ENCODE measurements at regions of chr2 and their contacts with region 1.

Region 1: GRCh38 chr2:105754011-105754410 is 9.3 kb downstream of the NCK2 start:
- DNase-seq: peak; percentile 39
- H3K4me3 Mint-ChIP-seq: peak overlapping the region; percentile 57
- H3K27ac Mint-ChIP-seq: peak overlapping the region; percentile 88
- H3K4me1 Mint-ChIP-seq: peaks cover 85% of the 10 kb centered on the region
- H3K27me3 Mint-ChIP-seq: no peaks in the 10 kb centered on the region

Region 2: GRCh38 chr2:105557021-105557920 is 196.7 kb before region 1 on chr2:
- intact Hi-C with region 1: no loop called
- DNase-seq: no peak
- H3K4me3 Mint-ChIP-seq: no peak overlapping the region
- H3K27ac Mint-ChIP-seq: no peak overlapping the region
- H3K4me1 Mint-ChIP-seq: no peaks in the 10 kb centered on the region
- H3K27me3 Mint-ChIP-seq: peaks cover 44% of the 10 kb centered on the region

Region 3: GRCh38 chr2:105769504-105769903 is 15.5 kb after region 1 on chr2:
- intact Hi-C with region 1: loop called (anchors 1 kb)
- DNase-seq: no peak
- H3K4me3 Mint-ChIP-seq: peak overlapping the region; percentile 45
- H3K27ac Mint-ChIP-seq: peak overlapping the region; percentile 91
- H3K4me1 Mint-ChIP-seq: peaks cover 74% of the 10 kb centered on the region
- H3K27me3 Mint-ChIP-seq: no peaks in the 10 kb centered on the region

Region 4: GRCh38 chr2:105929516-105929915 is 175.5 kb after region 1 on chr2:
- intact Hi-C with region 1: no loop called
- DNase-seq: no peak
- H3K4me3 Mint-ChIP-seq: no peak overlapping the region
- H3K27ac Mint-ChIP-seq: peak overlapping the region; percentile 33
- H3K4me1 Mint-ChIP-seq: peaks cover 33% of the 10 kb centered on the region
- H3K27me3 Mint-ChIP-seq: no peaks in the 10 kb centered on the region